ENCODE measurements at regions of chrX and their contacts with region 1.

Region 1: GRCh38 chrX:83008415-83008814 is 499.7 kb upstream of the POU3F4 start:
- DNase-seq: no peak
- H3K4me3 Mint-ChIP-seq: no peak overlapping the region
- H3K27ac Mint-ChIP-seq: no peak overlapping the region
- H3K4me1 Mint-ChIP-seq: no peaks in the 10 kb centered on the region
- H3K27me3 Mint-ChIP-seq: no peaks in the 10 kb centered on the region

Region 2: GRCh38 chrX:83630662-83631061 is 622.2 kb after region 1 on chrX:
- intact Hi-C with region 1: loop called (anchors 2 kb)
- DNase-seq: no peak
- H3K4me3 Mint-ChIP-seq: no peak overlapping the region
- H3K27ac Mint-ChIP-seq: no peak overlapping the region
- H3K4me1 Mint-ChIP-seq: peaks cover 5% of the 10 kb centered on the region
- H3K27me3 Mint-ChIP-seq: no peaks in the 10 kb centered on the region